BJ (cell line): ENCODE measurements at regions of chr17 and their contacts with region 1.

Region 1: GRCh38 chr17:1573916-1574696 is 11.5 kb upstream of the PITPNA start:
- DNase-seq: no peak
- H3K4me3 ChIP-seq: no peak overlapping the region
- H3K27me3 ChIP-seq: no peaks in the 10 kb centered on the region; the same call in 1 of the 2 replicates
- CTCF ChIP-seq: peak; percentile 97

Region 2: GRCh38 chr17:1563786-1564613 is 10.1 kb before region 1 on chr17:
- CTCF ChIA-PET with region 1: interaction called, 10 read pairs
- POLR2A ChIA-PET with region 1: no interaction called
- DNase-seq: no peak
- H3K4me3 ChIP-seq: no peak overlapping the region
- H3K27me3 ChIP-seq: no peaks in the 10 kb centered on the region; the same call in 1 of the 2 replicates
- CTCF ChIP-seq: no peak

Region 3: DNA sequence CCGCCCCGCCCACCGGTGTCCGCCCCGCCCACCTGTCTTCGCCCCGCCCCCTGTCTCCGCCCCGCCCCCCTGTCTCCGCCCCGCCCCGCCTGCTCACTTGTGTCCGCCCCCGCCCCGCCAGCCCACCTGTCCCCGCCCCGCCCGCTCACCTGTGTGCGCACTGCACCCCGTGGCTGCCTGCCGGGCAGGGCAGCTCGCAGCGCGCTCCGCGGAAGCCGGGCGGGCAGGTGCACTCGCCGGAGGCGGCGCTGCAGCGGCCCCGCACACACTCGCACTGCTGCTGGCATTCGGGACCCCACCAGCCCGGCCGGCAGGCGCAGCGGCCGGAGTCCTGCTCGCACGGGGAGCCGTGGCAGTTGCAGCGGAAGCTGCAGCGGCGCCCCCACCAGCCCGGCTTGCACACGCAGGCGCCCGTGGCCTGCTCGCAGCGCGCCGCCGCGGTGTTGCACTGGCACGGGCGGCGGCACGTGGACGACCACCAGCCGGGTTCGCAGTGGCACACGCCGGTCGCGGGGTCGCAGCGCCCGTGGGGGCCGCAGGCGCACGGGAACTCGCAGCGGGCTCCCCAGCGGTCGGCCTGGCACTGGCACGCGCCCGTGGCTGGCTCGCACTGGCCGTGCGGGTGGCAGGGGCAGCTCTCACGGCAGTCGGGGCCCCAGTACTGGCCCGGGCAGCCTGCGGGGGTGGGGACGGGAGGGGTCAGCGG is 69.3 kb after region 1 on chr17:
- CTCF ChIA-PET with region 1: interaction called, 36 read pairs
- POLR2A ChIA-PET with region 1: no interaction called
- DNase-seq: no peak
- H3K4me3 ChIP-seq: peak overlapping the region; percentile 33
- H3K27me3 ChIP-seq: no peaks in the 10 kb centered on the region
- CTCF ChIP-seq: no peak

Region 4: GRCh38 chr17:1648963-1649843 is 75.1 kb after region 1 on chr17:
- CTCF ChIA-PET with region 1: interaction called, 36 read pairs
- POLR2A ChIA-PET with region 1: interaction called, 4 read pairs
- DNase-seq: peak; percentile 67
- H3K4me3 ChIP-seq: peak overlapping the region; percentile 63
- H3K27me3 ChIP-seq: no peaks in the 10 kb centered on the region
- CTCF ChIP-seq: peak; percentile 84